ENCODE measurements at regions of chr12 and their contacts with region 1.

Region 1: GRCh38 chr12:27243804-27244683 is at the start of gene STK38L:
- DNase-seq: peak; percentile 93
- H3K4me3 ChIP-seq: peak within 1 kb of the TSS; percentile 59 to 65
- H3K27ac ChIP-seq: peak within 1 kb of the TSS; percentile 81 to 85
- H3K4me1 ChIP-seq: peaks cover 3% of the 10 kb centered on the region
- H3K27me3 ChIP-seq: no peaks in the 10 kb centered on the region
- CTCF ChIP-seq: peak in 2 of 4 experiments; percentile 23 to 27
- POLR2A ChIP-seq: peak; percentile 96
- total RNA-seq, gene STK38L: 25.3 to 37.1 TPM

Region 2: DNA sequence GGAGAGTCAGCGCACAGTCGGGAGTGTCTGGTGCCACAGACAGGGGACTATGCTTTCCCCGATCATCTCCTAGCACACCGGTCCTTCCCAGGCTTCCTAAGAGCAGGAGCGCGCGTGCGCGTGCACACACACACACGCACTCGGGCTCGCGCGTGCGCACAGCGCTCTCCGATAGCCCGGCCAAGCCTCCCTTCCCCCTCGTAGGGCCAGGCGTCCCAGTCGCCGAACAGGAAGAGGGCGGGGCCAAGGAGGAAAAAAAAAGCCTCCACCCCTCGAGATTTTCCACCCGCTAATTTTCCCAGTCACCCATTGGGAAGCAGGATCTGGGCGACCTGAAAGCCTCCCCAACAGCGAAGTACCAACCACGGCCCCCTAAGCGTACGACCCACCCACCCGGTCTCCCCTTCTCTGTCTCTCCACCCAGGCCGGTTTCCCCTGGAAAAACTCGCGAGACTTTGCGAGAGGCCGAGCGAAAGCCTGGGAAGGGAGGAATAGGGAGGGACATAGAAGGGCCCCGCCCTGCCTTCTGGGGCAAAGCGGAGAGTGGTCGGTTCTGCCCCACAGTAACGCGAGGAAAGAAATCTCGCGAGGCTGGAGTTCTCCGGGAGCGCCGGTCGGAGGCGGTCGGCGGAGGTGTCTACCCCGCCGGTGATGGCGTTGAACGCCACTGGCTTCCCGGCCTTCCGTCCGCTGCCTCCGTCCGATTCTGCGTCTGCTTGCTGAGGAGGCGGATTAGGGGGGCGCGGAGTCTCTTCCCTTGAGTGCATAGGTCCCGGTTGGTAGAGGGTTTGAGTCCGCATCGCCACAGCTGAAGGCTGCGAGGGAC is 306.0 kb before region 1 on chr12 and contains the starts of genes FGFR1OP2 and INTS13:
- intact Hi-C with region 1: loop called (anchors 5 kb)
- DNase-seq: peak; percentile 98
- H3K4me3 ChIP-seq: peak within 1 kb of the TSS; percentile 79 to 90
- H3K27ac ChIP-seq: peak within 1 kb of the TSS; percentile 95 to 98
- H3K4me1 ChIP-seq: no peaks in the 10 kb centered on the region
- H3K27me3 ChIP-seq: no peaks in the 10 kb centered on the region
- CTCF ChIP-seq: no peak
- POLR2A ChIP-seq: peak; percentile 97
- total RNA-seq, gene FGFR1OP2: 45.0 to 64.4 TPM
- total RNA-seq, gene INTS13: 22.1 to 23.5 TPM

Region 3: GRCh38 chr12:27193854-27194544 is 50.0 kb before region 1 on chr12:
- intact Hi-C with region 1: loop called (anchors 5 kb)
- DNase-seq: peak; percentile 16
- H3K4me3 ChIP-seq: no peak overlapping the region
- H3K27ac ChIP-seq: peak overlapping the region; percentile 38
- H3K4me1 ChIP-seq: peaks cover 3% of the 10 kb centered on the region
- H3K27me3 ChIP-seq: no peaks in the 10 kb centered on the region
- CTCF ChIP-seq: peak in 1 of 4 experiments; percentile 9
- POLR2A ChIP-seq: no peak

Region 4: GRCh38 chr12:27284751-27285150 is 40.7 kb after region 1 on chr12:
- intact Hi-C with region 1: loop called (anchors 5 kb)
- DNase-seq: no peak
- H3K4me3 ChIP-seq: no peak overlapping the region
- H3K27ac ChIP-seq: peak overlapping the region in 1 of 2 donors; percentile 1
- H3K4me1 ChIP-seq: no peaks in the 10 kb centered on the region
- H3K27me3 ChIP-seq: no peaks in the 10 kb centered on the region
- CTCF ChIP-seq: no peak
- POLR2A ChIP-seq: no peak